Activated CD8-positive, alpha-beta T cell treated with anti-CD3 and anti-CD28 coated beads, Interleukin-2, amount 10 ng/mL, durations not matched to agents 7 days and 5 days (primary cell): ENCODE measurements at regions of chr13 and their contacts with region 1.

Region 1: GRCh38 chr13:49278211-49278610 is 30.5 kb downstream of the CDADC1 start:
- DNase-seq: no peak
- ATAC-seq: no peak
- H3K4me3 Mint-ChIP-seq: no peak overlapping the region
- H3K27ac Mint-ChIP-seq: no peak overlapping the region
- H3K4me1 Mint-ChIP-seq: no peaks in the 10 kb centered on the region
- H3K27me3 Mint-ChIP-seq: no peaks in the 10 kb centered on the region

Region 2: GRCh38 chr13:49214917-49215376 is 63.3 kb before region 1 on chr13:
- CTCF ChIA-PET with region 1: interaction called, 15 read pairs
- POLR2A ChIA-PET with region 1: no interaction called
- DNase-seq: peak; percentile 66
- ATAC-seq: peak; percentile 68
- H3K4me3 Mint-ChIP-seq: no peak overlapping the region
- H3K27ac Mint-ChIP-seq: peak overlapping the region; percentile 79
- H3K4me1 Mint-ChIP-seq: peaks cover 22% of the 10 kb centered on the region
- H3K27me3 Mint-ChIP-seq: peaks cover 24% of the 10 kb centered on the region

Region 3: GRCh38 chr13:49247643-49248621 is 30.3 kb before region 1 on chr13 and contains the start of gene CDADC1:
- CTCF ChIA-PET with region 1: interaction called, 25 read pairs
- POLR2A ChIA-PET with region 1: interaction called, 9 read pairs
- DNase-seq: peak; percentile 96
- ATAC-seq: peak; percentile 93
- H3K4me3 Mint-ChIP-seq: peak within 1 kb of the TSS; percentile 94
- H3K27ac Mint-ChIP-seq: peak within 1 kb of the TSS; percentile 97
- H3K4me1 Mint-ChIP-seq: peaks cover 40% of the 10 kb centered on the region
- H3K27me3 Mint-ChIP-seq: peaks cover 19% of the 10 kb centered on the region
- total RNA-seq, gene CDADC1: 12.3 to 13.7 TPM

Region 4: DNA sequence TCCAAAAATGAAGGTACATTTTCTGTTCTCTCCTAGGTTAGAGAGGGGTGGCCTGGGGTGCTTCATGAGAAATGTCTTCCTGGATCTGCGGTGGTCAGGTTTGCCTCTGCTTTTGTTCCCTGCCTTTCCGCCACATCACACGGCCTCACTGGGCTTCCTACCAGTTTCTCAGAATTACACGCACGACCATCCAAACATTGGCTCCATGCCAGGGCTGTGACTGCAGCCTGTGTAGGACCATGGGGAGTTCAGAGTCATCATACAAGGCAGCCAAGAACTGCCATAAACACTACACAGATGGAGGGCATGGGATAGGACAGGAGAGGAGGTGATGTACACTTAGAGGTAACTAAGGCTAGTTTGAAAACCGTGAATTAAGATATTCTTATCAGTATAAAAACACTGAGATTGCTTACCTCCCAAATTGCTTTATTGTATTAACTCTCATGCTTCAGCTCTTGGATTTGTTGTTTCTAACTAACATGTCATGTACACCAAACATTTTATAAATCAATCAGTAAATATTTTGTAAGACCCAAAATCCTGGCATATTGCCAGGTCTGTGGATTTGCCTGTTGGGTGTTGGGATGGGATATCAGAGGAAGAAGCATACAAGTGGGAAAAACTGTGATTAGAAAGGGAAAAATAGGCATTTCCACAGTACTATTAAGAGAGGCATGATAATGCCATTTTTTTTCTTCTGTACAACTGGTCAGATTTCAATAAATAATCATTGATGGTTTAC is 14.7 kb after region 1 on chr13:
- CTCF ChIA-PET with region 1: interaction called, 11 read pairs
- POLR2A ChIA-PET with region 1: no interaction called
- DNase-seq: peak; percentile 59
- ATAC-seq: peak; percentile 78
- H3K4me3 Mint-ChIP-seq: peak overlapping the region; percentile 14
- H3K27ac Mint-ChIP-seq: peak overlapping the region; percentile 71
- H3K4me1 Mint-ChIP-seq: peaks cover 26% of the 10 kb centered on the region
- H3K27me3 Mint-ChIP-seq: no peaks in the 10 kb centered on the region

Region 5: DNA sequence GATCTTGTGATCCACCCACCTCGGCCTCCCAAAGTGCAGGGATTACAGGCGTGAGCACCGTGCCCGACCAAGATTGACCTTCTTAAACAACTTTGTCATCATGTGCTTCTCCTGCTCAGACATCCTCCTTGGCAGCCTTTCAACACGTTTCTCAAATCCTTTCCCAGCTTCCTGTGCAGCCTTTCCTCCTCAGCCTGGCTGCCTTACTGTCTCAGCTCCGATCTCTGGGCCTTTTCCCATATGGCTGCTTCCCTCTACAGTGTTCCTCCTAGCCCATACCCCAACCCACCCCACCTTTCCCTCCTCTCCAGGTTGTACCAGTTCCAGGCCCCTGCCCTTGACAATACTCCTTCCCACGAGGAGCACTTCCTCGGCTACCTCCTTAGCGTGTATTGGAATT is 224.7 kb after region 1 on chr13:
- CTCF ChIA-PET with region 1: no interaction called
- POLR2A ChIA-PET with region 1: no interaction called
- DNase-seq: no peak
- ATAC-seq: no peak
- H3K4me3 Mint-ChIP-seq: no peak overlapping the region
- H3K27ac Mint-ChIP-seq: no peak overlapping the region
- H3K4me1 Mint-ChIP-seq: peaks cover 27% of the 10 kb centered on the region
- H3K27me3 Mint-ChIP-seq: no peaks in the 10 kb centered on the region